IMR-90 (cell line): ENCODE measurements at regions of chr21 and their contacts with region 1.

Region 1: DNA sequence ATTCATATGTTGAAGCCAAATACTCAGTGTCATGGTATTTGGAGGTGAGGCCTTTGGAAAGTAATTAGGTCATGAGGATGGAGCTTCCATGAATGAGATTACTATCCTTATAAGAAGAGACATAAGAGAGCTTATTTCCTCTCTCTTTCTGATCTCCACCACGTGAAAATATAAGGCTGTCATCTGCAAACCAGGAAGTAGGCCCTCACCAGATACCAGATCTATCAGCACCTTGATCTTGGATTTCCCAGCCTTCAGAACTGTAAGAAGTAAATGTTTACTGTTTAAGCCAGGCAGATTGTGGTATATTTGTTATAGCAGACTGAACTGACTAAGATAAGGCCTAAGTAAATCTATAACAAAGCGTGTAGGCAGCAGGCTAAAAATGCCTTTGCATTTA is 25.3 kb downstream of the RBM11 start:
- DNase-seq: no peak
- ATAC-seq: no peak
- H3K4me3 ChIP-seq: no peak overlapping the region
- H3K27ac ChIP-seq: no peak overlapping the region
- H3K4me1 ChIP-seq: no peaks in the 10 kb centered on the region
- H3K27me3 ChIP-seq: no peaks in the 10 kb centered on the region
- CTCF ChIP-seq: no peak
- POLR2A ChIP-seq: no peak
- RAD21 ChIP-seq: no peak

Region 2: GRCh38 chr21:14265023-14265422 is 23.7 kb after region 1 on chr21:
- CTCF ChIA-PET with region 1: interaction called, 3 read pairs
- POLR2A ChIA-PET with region 1: interaction called, 4 read pairs
- dilution Hi-C with region 1: no loop called
- in situ Hi-C with region 1: no loop called
- intact Hi-C with region 1: loop called (anchors 1 kb)
- DNase-seq: no peak
- ATAC-seq: no peak
- H3K4me3 ChIP-seq: no peak overlapping the region
- H3K27ac ChIP-seq: no peak overlapping the region
- H3K4me1 ChIP-seq: no peaks in the 10 kb centered on the region
- H3K27me3 ChIP-seq: no peaks in the 10 kb centered on the region
- CTCF ChIP-seq: no peak
- POLR2A ChIP-seq: no peak
- RAD21 ChIP-seq: no peak

Region 3: DNA sequence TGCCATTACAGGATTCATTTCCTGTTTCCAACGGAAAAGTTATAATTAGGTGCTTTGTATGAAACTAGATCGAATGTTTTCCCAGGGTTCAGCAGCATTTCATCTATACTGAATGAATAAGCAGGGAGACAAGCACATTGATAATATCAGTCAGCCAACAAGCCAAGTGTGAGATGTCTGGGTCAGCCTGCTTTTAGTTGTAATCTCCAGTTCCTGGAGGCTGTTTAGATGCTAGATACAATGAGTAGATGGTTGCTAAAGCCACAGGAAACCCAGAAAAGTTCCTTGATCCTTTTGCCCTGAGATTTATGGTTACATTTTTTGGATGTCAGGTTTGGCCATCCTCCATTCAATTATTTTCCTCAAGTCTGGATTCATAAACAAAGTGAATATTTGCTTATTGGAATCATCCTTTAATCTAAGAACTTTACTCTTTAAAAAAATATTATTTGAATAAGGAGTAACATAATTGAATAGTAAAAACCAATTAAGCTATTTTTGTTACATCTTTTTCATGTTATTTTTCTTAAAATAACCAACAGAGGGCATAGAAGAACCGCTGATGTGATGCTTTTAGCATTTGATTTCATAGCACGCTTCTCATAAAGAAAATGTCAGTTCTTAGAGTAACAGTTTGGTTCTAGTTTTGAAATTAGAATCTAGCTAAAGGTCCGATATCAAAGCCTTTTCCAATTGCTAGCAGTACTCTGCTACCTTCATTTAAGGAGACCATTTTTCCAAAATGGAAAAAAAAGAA is 65.0 kb after region 1 on chr21:
- CTCF ChIA-PET with region 1: no interaction called
- POLR2A ChIA-PET with region 1: no interaction called
- dilution Hi-C with region 1: no loop called
- in situ Hi-C with region 1: no loop called
- intact Hi-C with region 1: no loop called
- DNase-seq: peak; percentile 3
- ATAC-seq: peak; percentile 24; the same call in 1 of the 2 replicates
- H3K4me3 ChIP-seq: no peak overlapping the region
- H3K27ac ChIP-seq: no peak overlapping the region
- H3K4me1 ChIP-seq: no peaks in the 10 kb centered on the region
- H3K27me3 ChIP-seq: no peaks in the 10 kb centered on the region
- CTCF ChIP-seq: peak; percentile 23
- POLR2A ChIP-seq: no peak
- RAD21 ChIP-seq: peak; percentile 34; the same call in 1 of the 2 replicates